PC-9 (cell line): ENCODE measurements at regions of chr15 and their contacts with region 1.

Region 1: GRCh38 chr15:75639709-75640482 is at the start of gene IMP3:
- DNase-seq: peak; percentile 92 to 93
- H3K4me3 ChIP-seq: peak within 1 kb of the TSS; percentile 88
- H3K27ac ChIP-seq: peak within 1 kb of the TSS; percentile 70
- H3K4me1 ChIP-seq: peaks cover 38% of the 10 kb centered on the region
- H3K27me3 ChIP-seq: no peaks in the 10 kb centered on the region
- CTCF ChIP-seq: no peak
- total RNA-seq, gene IMP3: 45.4 and 53.0 TPM in 2 replicates

Region 2: DNA sequence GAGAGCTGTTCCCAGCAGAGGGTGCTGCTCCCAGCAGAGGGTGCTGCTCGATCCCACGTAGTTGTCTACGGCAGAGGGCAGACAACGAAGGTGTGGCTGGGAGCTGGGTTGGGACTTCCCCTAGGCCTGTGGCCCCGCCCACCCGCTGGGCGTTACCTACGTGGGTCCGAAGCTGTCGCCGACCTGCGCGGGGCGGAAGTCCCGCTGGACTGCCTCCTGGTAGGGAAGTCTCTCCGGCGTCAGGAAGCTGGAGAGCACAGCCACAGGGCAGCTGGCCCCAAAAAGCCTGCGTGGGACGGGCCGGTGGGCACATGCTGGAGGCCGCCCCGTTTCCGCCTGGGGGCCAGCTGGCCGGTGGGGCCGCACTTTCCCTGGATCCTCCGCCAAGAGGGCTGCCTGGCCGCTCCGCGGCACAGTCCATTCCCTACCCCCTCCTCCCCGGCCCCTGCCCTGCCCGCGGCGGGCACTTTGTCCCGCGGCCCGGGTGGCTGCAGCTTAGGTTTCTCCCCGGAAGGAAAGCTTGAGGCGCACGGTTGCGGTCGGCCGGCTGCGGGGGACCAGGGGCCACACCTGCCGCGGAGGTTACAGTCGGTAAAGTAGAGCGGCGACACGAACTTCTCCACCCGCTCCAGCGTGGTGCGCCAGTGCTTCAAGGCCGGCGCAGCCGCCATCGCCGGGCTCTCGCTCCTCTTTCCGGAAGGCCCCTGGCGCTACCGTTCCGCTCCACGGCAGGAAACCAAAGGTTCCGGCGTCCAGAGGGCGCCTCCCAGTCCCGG is 271.8 kb before region 1 on chr15 and contains the start of gene MAN2C1:
- CTCF ChIA-PET with region 1: interaction called, 3 read pairs
- POLR2A ChIA-PET with region 1: interaction called, 3 read pairs
- intact Hi-C with region 1: loop called (anchors 5 kb)
- DNase-seq: peak; percentile 93 to 97
- H3K4me3 ChIP-seq: peak within 1 kb of the TSS; percentile 63
- H3K27ac ChIP-seq: peak within 1 kb of the TSS; percentile 79
- H3K4me1 ChIP-seq: peaks cover 25% of the 10 kb centered on the region
- H3K27me3 ChIP-seq: no peaks in the 10 kb centered on the region
- CTCF ChIP-seq: no peak; the same call in 1 of the 2 replicates
- total RNA-seq, gene MAN2C1: 94.3 and 143 TPM in 2 replicates

Region 3: DNA sequence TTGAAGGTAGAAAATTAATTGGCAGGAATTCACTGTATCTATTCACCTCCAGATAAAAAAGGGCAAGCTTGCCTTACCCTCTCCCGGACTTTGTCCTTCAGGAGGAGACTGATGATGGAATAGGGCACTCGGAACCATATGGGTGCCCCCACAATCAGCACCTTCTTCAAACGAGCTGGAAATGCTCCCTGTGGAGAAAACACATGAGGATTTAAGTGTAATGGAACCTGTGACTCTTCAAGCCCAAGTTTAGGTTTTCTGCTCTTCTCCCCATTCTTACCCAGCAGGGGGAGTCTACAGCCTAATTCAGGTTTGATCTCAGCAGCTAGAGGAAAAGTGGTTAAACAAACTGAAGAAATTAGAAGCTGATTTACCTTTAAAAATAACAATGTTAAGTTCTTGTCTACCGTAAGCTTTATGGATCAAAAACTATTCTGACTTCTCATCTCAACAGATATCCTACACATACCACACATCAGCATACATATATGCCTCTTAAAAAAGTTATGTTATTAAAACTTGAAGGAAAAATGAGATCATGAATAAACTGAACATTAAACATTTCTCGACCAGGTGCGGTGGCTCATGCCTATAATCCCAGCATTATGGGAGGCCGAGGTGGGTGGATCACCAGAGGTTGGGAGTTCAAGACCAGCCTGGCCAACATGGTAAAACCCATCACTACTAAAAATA is 130.9 kb before region 1 on chr15:
- CTCF ChIA-PET with region 1: no interaction called
- POLR2A ChIA-PET with region 1: no interaction called
- intact Hi-C with region 1: loop called (anchors 5 kb)
- DNase-seq: peak in 1 of 2 experiments; percentile 10
- H3K4me3 ChIP-seq: no peak overlapping the region
- H3K27ac ChIP-seq: no peak overlapping the region
- H3K4me1 ChIP-seq: no peaks in the 10 kb centered on the region
- H3K27me3 ChIP-seq: no peaks in the 10 kb centered on the region
- CTCF ChIP-seq: peak; percentile 67

Region 4: DNA sequence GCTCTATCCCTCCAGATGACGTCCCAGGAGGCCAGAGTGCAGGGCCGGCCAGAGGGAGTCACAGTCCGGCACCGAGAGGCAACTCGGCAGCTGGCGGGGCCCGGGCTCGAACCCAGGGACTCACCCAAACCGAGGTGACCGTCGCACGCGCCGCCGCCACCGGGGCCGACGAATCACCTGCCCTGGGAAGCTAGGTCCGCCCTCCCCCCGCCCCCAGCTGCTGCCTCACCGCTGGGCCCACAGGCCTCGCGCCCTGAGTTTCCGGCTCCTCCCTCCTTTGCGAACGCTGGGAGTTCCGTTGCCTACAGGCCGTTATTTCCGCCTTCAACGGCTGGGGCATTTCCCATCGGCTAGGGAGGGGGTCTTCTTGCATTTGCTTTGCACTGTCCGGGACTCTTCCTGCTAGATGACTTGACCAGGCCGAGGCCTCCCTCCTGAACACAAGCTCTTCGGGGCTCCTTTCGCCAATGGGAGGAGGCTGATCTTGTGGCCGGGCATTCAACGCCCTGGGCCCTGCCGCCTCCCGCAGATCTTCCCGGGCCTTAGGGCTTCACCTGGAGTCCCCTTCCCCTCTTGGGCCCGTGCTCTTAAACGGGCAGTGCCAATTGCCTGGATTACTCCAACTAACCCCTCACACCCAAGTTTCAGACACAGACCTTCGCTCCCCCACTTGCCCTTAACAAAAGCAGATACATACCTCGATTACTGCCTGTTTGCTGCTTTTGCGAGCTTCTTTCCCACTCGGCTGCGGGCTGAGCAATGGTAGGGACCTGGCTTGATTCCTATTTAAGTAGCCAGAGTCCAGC is 14.2 kb before region 1 on chr15 and contains the start of gene SNUPN:
- CTCF ChIA-PET with region 1: no interaction called
- POLR2A ChIA-PET with region 1: interaction called, 6 read pairs
- intact Hi-C with region 1: loop called (anchors 2 kb)
- DNase-seq: peak; percentile 76 to 87
- H3K4me3 ChIP-seq: peak within 1 kb of the TSS; percentile 69
- H3K27ac ChIP-seq: peak within 1 kb of the TSS; percentile 73
- H3K4me1 ChIP-seq: peaks cover 22% of the 10 kb centered on the region
- H3K27me3 ChIP-seq: no peaks in the 10 kb centered on the region
- CTCF ChIP-seq: no peak
- total RNA-seq, gene SNUPN: 37.6 and 40.0 TPM in 2 replicates

Region 5: DNA sequence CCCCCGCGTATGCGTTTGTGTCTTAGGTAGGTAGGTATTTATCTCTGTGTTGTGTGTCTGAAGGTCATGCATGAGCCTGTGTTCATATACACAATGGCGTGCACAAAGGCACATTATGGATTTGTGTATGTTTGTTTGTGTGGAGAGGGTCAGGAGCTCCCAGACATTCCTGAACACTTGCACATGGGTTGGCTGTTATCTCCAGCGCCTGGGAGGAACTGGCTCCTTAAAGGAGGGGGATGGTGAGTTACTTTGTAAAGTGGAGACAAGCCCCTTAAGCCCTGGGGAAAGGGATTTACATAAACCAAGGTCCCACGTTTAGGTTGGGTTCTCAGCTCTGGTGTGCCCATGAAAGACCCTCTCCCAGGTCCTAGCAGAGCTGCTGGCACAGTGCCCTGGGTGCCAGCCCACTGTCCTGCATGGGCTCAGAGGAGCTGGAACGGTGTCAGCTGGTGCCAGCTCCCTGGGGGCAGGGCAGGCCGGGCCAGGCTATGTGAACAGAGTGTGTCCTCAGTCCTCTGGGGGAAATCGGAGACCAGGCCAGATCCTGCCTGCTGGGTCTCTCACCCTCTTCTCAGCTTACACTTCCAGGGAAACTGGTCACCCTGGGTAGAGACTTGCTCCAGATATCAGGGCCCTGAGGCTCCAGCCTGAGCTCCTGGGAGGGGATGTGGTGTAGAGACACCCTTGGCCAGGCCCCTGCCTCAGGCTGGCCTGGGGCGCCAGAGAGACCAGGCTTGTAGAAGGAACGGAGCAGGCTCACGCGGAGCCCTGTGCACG is 32.9 kb after region 1 on chr15:
- CTCF ChIA-PET with region 1: no interaction called
- POLR2A ChIA-PET with region 1: interaction called, 7 read pairs
- intact Hi-C with region 1: loop called (anchors 2 kb)
- DNase-seq: peak; percentile 72 to 81
- H3K4me3 ChIP-seq: peak overlapping the region; percentile 32; the same call in 1 of the 2 replicates
- H3K27ac ChIP-seq: peak overlapping the region; percentile 71
- H3K4me1 ChIP-seq: peaks cover 71% of the 10 kb centered on the region
- H3K27me3 ChIP-seq: no peaks in the 10 kb centered on the region
- CTCF ChIP-seq: no peak

Region 6: GRCh38 chr15:75861750-75862402 is 222.0 kb after region 1 on chr15:
- CTCF ChIA-PET with region 1: no interaction called
- POLR2A ChIA-PET with region 1: no interaction called
- intact Hi-C with region 1: no loop called
- DNase-seq: no peak
- H3K4me3 ChIP-seq: no peak overlapping the region
- H3K27ac ChIP-seq: no peak overlapping the region
- H3K4me1 ChIP-seq: no peaks in the 10 kb centered on the region
- H3K27me3 ChIP-seq: no peaks in the 10 kb centered on the region
- CTCF ChIP-seq: no peak

Region 7: GRCh38 chr15:77554306-77555080 is 1914.6 kb after region 1 on chr15:
- CTCF ChIA-PET with region 1: no interaction called
- POLR2A ChIA-PET with region 1: no interaction called
- intact Hi-C with region 1: no loop called
- DNase-seq: no peak
- H3K4me3 ChIP-seq: no peak overlapping the region
- H3K27ac ChIP-seq: no peak overlapping the region
- H3K4me1 ChIP-seq: no peaks in the 10 kb centered on the region
- H3K27me3 ChIP-seq: no peaks in the 10 kb centered on the region; the same call in 1 of the 2 replicates
- CTCF ChIP-seq: no peak